HAP-1 (cell line): ENCODE measurements at regions of chr6 and their contacts with region 1.

Region 1: GRCh38 chr6:44086931-44087574 is 40.2 kb downstream of the MRPL14 start:
- DNase-seq: no peak
- H3K4me3 ChIP-seq: no peak overlapping the region
- H3K4me1 ChIP-seq: no peaks in the 10 kb centered on the region
- H3K27me3 ChIP-seq: no peaks in the 10 kb centered on the region

Region 2: DNA sequence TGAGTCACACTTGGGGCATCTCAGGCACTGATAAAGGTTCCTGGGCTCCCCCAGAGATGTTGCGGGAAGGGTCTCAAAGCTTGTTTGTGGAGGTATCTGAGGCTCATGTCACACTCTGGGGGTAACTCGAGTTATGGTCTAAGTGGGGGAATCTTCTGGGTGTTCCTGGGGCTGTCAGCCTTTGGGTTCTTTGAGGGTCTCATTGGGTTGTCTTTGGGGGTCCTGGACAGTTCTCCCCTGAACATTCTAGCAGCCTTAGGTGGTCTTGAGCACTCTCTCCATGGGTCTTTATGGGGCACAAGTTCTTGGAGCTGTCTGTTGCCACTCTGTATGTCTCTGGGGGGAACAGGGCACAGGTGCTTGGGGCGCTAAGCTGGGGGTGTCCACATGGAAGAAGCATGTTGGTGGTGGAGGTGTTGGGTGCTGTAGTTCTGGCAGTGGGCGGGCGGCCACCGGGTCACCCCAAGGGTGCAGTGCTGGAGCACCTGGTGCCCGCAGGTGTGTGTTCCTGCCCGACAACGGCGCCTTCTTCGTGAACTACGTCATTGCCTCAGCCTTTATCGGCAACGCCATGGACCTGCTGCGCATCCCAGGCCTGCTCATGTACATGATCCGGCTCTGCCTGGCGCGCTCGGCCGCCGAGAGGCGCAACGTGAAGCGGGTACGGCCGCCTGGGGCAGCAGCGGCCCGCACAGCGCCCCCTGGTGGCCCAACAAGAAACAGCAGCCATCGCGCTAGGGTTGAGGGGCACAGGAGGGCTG is 64.5 kb after region 1 on chr6:
- in situ Hi-C with region 1: loop called (anchors 5 kb)
- DNase-seq: peak; percentile 31 to 86
- H3K4me3 ChIP-seq: no peak overlapping the region
- H3K4me1 ChIP-seq: no peaks in the 10 kb centered on the region
- H3K27me3 ChIP-seq: no peaks in the 10 kb centered on the region

Region 3: GRCh38 chr6:44475779-44476434 is 388.9 kb after region 1 on chr6:
- in situ Hi-C with region 1: no loop called
- DNase-seq: peak; percentile 87 to 89
- H3K4me3 ChIP-seq: no peak overlapping the region
- H3K4me1 ChIP-seq: peaks cover 8% of the 10 kb centered on the region
- H3K27me3 ChIP-seq: no peaks in the 10 kb centered on the region